Colonic mucosa (tissue), 4 donors: ENCODE measurements at regions of chr19 and their contacts with region 1.

Region 1: DNA sequence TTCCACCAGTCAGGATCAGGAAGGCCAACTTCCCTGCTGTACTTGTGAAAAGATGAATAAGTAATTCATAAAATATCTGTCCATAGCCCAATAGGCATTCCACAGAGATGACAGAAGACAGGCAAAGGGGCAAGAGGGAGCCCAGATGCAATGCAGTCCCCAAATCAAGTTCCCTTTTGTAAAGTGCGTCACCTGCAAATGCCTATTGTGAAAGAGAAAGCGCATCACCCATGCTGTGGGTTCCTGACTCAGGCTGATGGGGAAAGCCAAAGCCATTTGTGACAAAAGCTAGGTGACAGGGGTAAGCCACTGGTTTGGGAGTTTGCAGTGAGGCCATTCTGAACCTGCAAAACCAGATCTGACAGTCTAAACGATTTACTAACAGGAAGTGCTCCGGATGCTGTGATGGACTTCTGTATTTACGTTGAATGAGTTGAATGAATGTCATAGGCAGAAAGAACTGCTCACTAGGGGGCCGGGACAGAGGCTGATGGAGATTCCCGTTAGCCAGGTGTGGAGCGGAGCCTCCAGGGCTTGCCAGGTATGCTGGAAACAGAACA is 157.5 kb upstream of the ZNF536 start:
- DNase-seq: no peak
- H3K4me3 ChIP-seq: no peak overlapping the region
- H3K27ac ChIP-seq: no peak overlapping the region
- H3K4me1 ChIP-seq: no peaks in the 10 kb centered on the region
- H3K27me3 ChIP-seq: no peaks in the 10 kb centered on the region
- CTCF ChIP-seq: no peak

Region 2: DNA sequence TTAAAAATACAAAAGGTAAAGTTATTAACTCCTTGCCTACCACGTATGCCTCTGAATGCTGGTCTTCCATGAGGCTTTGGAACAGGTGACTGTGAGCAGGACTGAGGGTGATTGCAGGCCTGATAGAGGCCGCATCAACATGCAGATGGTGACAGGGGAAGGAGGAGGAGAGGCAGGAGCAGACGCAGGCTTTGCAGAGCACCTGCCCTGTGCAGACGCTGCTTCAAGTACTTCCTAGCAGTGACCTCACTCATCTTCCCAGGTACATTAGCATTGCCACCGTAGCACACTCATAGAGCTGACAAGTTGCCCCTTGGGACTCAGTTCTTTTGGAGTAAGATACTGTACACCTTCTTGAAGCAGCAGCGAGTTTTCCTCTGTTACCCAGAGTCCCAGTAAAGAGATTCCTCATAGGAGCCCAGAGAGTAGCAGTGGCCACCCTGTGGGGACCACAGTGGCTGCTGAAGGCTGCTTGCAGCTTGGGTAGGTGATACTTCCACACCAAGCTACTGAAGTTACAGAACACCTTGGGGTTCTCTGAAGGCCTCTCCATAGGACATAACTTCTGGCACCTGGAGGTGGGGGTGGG is 213.5 kb after region 1 on chr19:
- intact Hi-C with region 1: no loop called
- DNase-seq: no peak
- H3K4me3 ChIP-seq: no peak overlapping the region
- H3K27ac ChIP-seq: no peak overlapping the region
- H3K4me1 ChIP-seq: no peaks in the 10 kb centered on the region
- H3K27me3 ChIP-seq: no peaks in the 10 kb centered on the region
- CTCF ChIP-seq: no peak

Region 3: DNA sequence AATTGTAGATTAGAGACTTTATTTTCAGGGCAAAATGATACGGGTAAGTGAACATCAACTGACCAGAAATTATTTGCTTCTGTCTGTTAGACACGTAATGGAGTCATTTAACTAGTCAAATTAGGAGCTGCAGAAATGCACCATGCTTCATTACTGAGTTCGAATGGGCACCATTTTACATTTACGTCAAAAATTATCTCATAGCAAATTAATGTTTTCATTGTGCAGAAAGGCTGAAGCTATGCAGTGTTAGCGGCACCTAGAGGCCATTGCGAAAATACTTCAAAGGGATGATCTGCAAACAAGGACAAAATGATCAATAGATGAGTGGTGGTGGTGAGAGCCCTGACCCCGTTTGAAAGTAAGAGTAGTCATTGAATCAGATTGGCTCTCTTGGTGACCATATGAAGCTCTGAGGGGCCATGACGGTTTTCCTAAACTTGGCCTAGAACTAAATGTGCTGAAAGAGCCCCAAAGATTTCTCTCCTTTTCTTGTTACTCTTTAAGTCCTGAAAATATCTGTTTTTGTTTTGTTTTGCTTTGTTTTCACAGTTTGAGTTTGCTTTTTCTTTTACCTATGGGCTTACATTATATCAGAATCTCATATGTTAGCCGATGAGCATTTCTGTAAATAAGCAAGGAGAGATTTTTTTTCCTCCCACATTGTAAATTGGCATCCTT is 435.3 kb after region 1 on chr19:
- intact Hi-C with region 1: loop called (anchors 5 kb)
- DNase-seq: peak; percentile 25
- H3K4me3 ChIP-seq: no peak overlapping the region
- H3K27ac ChIP-seq: no peak overlapping the region
- H3K4me1 ChIP-seq: no peaks in the 10 kb centered on the region
- H3K27me3 ChIP-seq: no peaks in the 10 kb centered on the region
- CTCF ChIP-seq: peak; percentile 60